Heart right ventricle (tissue), 16 donors: ENCODE measurements at regions of chrX and their contacts with region 1.

Region 1: DNA sequence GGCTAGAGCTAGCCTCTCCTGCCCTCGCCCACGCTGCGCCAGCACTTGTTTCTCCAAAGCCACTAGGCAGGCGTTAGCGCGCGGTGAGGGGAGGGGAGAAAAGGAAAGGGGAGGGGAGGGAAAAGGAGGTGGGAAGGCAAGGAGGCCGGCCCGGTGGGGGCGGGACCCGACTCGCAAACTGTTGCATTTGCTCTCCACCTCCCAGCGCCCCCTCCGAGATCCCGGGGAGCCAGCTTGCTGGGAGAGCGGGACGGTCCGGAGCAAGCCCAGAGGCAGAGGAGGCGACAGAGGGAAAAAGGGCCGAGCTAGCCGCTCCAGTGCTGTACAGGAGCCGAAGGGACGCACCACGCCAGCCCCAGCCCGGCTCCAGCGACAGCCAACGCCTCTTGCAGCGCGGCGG is at the start of gene AR:
- DNase-seq: peak; percentile 60 to 70
- ATAC-seq: peak; percentile 75 to 87 (median 80)
- H3K4me3 ChIP-seq: peak within 1 kb of the TSS; percentile 36 to 57 (median 50)
- H3K27ac ChIP-seq: peak within 1 kb of the TSS in 8 of 10 donors; percentile 35 to 75 (median 68)
- H3K4me1 ChIP-seq: peaks cover 0 to 5% (median 0%) of the 10 kb centered on the region in 9 donors
- H3K27me3 ChIP-seq: peaks cover 0 to 79% (median 0%) of the 10 kb centered on the region in 7 donors
- CTCF ChIP-seq: no peak
- total RNA-seq, gene AR: 18.4 to 35.2 (median 27.0) TPM

Region 2: GRCh38 chrX:67665583-67665982 is 121.8 kb after region 1 on chrX:
- intact Hi-C with region 1: no loop called
- DNase-seq: no peak
- ATAC-seq: no peak
- H3K4me3 ChIP-seq: no peak overlapping the region
- H3K27ac ChIP-seq: no peak overlapping the region
- H3K4me1 ChIP-seq: no peaks in the 10 kb centered on the region
- H3K27me3 ChIP-seq: no peaks in the 10 kb centered on the region
- CTCF ChIP-seq: no peak

Region 3: GRCh38 chrX:67718926-67719325 is 175.1 kb after region 1 on chrX:
- intact Hi-C with region 1: loop called in 3 of 10 experiments (anchors 10 kb)
- DNase-seq: peak; percentile 20 to 41
- ATAC-seq: peak; percentile 67 to 96 (median 90)
- H3K4me3 ChIP-seq: no peak overlapping the region
- H3K27ac ChIP-seq: peak overlapping the region in 7 of 10 donors; percentile 27 to 65 (median 45)
- H3K4me1 ChIP-seq: peaks cover 0 to 40% (median 9%) of the 10 kb centered on the region in 9 donors
- H3K27me3 ChIP-seq: no peaks in the 10 kb centered on the region
- CTCF ChIP-seq: peak in 3 of 9 donors; percentile 34 to 40 (median 35)

Region 4: DNA sequence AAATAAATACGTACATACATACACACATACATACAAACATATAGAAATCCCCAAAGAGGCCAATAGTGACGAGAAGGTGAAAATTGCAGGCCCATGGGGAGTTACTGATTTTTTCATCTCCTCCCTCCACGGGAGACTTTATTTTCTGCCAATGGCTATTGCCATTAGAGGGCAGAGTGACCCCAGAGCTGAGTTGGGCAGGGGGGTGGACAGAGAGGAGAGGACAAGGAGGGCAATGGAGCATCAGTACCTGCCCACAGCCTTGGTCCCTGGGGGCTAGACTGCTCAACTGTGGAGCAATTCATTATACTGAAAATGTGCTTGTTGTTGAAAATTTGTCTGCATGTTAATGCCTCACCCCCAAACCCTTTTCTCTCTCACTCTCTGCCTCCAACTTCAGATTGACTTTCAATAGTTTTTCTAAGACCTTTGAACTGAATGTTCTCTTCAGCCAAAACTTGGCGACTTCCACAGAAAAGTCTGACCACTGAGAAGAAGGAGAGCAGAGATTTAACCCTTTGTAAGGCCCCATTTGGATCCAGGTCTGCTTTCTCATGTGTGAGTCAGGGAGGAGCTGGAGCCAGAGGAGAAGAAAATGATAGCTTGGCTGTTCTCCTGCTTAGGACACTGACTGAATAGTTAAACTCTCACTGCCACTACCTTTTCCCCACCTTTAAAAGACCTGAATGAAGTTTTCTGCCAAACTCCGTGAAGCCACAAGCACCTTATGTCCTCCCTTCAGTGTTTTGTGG is 180.7 kb after region 1 on chrX:
- intact Hi-C with region 1: loop called in 3 of 10 experiments (anchors 10 kb)
- DNase-seq: no peak
- ATAC-seq: peak in 1 of 8 donors; percentile 66
- H3K4me3 ChIP-seq: no peak overlapping the region
- H3K27ac ChIP-seq: no peak overlapping the region
- H3K4me1 ChIP-seq: peaks cover 0 to 43% (median 11%) of the 10 kb centered on the region in 9 donors
- H3K27me3 ChIP-seq: peaks cover 0 to 3% (median 0%) of the 10 kb centered on the region in 7 donors
- CTCF ChIP-seq: peak in 7 of 9 donors; percentile 10 to 46 (median 23)